ENCODE measurements at regions of chr13 and their contacts with region 1.

Region 1: DNA sequence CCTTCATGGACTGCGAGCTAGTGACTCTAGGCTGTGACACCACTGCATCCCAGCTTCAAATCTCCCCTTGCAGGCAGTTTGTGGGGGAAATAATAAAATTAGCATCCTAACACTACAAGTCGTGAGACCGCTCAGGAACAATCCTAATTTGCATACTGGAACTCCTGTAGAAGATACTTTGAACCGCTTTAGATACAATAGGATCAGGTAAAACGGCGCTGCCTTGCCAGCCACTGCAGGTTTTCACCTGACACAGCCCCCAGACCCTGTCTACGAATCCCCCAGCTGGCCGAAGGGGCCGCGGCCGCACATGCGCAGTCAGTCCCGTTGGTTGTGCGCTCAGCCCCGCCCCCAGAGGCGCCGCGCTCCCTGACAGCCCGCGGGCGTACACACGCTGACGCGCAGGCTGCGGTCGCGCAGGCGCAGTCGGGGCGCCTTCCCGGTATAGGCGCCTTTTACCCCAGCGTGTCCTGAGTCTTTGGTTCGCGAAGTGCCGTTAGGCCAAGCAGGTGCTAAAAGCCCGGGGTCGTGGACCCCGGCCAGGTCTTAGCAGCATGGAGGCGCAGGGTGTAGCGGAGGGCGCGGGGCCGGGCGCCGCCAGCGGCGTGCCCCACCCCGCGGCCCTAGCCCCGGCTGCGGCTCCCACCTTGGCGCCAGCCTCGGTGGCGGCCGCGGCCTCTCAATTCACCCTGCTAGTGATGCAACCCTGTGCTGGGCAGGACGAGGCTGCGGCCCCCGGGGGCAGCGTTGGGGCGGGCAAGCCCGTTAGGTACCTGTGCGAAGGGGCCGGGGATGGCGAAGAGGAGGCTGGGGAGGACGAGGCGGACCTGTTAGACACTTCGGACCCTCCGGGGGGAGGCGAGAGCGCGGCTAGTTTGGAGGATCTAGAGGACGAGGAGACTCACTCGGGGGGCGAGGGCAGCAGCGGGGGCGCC is at the start of gene RFXAP:
- DNase-seq: peak; percentile 92
- H3K4me3 Mint-ChIP-seq: peak within 1 kb of the TSS; percentile 91
- H3K27ac Mint-ChIP-seq: peak within 1 kb of the TSS; percentile 82
- H3K4me1 Mint-ChIP-seq: peaks cover 42% of the 10 kb centered on the region
- H3K27me3 Mint-ChIP-seq: peaks cover 7% of the 10 kb centered on the region
- total RNA-seq, gene RFXAP: 10.0 to 13.0 TPM

Region 2: GRCh38 chr13:36420437-36420891 is 398.6 kb before region 1 on chr13:
- CTCF ChIA-PET with region 1: interaction called, 3 read pairs
- POLR2A ChIA-PET with region 1: no interaction called
- intact Hi-C with region 1: loop called (anchors 1 kb)
- DNase-seq: peak; percentile 79
- H3K4me3 Mint-ChIP-seq: no peak overlapping the region
- H3K27ac Mint-ChIP-seq: peak overlapping the region; percentile 21
- H3K4me1 Mint-ChIP-seq: peaks cover 21% of the 10 kb centered on the region
- H3K27me3 Mint-ChIP-seq: peaks cover 43% of the 10 kb centered on the region

Region 3: DNA sequence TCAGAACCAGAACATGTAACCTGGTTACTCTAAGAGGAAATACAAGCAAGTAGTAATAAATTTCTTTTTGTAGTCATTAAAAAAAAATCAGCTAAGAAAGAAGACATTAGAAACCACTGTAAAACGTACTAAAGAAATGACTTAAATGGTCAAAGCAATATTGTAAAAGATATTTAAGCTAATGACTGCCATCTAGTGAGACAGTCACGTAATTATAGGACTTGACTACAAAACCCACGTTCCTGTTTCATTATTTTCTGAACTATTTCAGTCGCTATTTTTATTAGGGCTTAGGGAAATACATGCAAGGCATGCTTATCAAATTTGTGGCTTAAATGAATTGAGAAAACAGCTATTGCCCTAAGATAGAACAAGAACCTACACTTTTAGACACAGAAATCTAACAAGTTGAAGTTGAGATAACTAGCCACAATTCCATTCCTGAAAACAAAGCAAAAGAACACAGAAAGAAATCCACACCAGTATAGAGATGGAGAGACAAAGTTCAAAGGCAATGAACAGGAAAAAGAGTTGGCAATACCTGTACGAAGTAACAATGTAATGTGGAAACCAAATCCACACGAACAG is 162.2 kb after region 1 on chr13:
- CTCF ChIA-PET with region 1: interaction called, 13 read pairs
- POLR2A ChIA-PET with region 1: no interaction called
- intact Hi-C with region 1: loop called (anchors 5 kb)
- DNase-seq: no peak
- H3K4me3 Mint-ChIP-seq: no peak overlapping the region
- H3K27ac Mint-ChIP-seq: no peak overlapping the region
- H3K4me1 Mint-ChIP-seq: no peaks in the 10 kb centered on the region
- H3K27me3 Mint-ChIP-seq: no peaks in the 10 kb centered on the region

Region 4: DNA sequence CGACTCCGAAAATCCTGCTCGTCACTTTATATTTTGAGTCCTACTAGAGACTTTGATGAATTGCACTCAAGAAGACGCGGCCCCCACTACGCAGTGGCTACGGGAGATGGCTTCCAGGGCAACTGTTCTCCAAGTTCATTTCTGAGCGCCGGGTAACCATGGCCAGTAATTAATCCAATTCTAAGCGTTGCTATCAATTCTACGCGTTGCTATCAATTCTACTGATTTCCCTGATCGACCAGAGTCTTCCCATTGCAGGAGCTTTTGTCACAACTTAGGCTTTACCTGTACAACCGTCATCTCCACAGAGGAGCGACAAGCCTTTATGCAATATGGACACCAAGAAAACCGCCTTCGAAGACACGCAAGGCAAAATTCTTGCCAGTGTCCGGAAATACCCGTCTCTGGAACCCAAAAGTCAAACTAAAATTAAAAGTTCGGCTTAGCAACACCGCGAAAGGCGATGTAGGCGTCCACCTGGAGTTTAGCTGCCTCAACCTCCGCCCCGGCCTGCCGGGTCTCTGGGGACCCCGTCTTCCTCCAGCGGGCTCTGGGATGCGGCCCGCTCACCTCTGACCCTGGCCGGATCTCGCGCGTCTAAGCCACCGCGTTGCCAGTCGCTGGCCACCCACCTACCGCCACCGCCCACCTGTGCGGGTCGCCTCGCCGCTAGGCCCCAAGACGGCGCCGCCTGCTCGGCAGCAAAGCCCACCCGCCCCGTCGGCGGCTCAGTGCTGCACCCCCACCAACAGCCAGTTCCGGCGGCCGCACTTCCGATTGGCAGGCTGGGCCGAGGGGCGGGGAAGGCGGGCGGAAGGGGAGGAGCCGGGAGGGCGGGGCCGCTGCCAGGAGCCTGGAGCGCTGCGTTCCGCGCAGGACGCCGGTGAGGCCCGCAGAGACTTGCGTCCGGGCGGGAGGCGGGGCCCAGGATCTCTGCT is 240.1 kb after region 1 on chr13 and contains the start of gene SUPT20H:
- CTCF ChIA-PET with region 1: no interaction called
- POLR2A ChIA-PET with region 1: no interaction called
- intact Hi-C with region 1: loop called (anchors 1 kb)
- DNase-seq: peak; percentile 96
- H3K4me3 Mint-ChIP-seq: peak within 1 kb of the TSS; percentile 89
- H3K27ac Mint-ChIP-seq: peak within 1 kb of the TSS; percentile 94
- H3K4me1 Mint-ChIP-seq: peaks cover 30% of the 10 kb centered on the region
- H3K27me3 Mint-ChIP-seq: no peaks in the 10 kb centered on the region
- total RNA-seq, gene SUPT20H: 56.8 TPM